Activated CD4-positive, alpha-beta T cell treated with anti-CD3 and anti-CD28 coated beads for 36 hours (primary cell): ENCODE measurements at regions of chr19 and their contacts with region 1.

Region 1: GRCh38 chr19:41263850-41264580 is at the start of gene HNRNPUL1:
- DNase-seq: peak; percentile 99
- ATAC-seq: peak; percentile 70
- H3K4me3 Mint-ChIP-seq: peak within 1 kb of the TSS; percentile 95
- H3K27ac Mint-ChIP-seq: peak within 1 kb of the TSS; percentile 100
- H3K4me1 Mint-ChIP-seq: peaks cover 34% of the 10 kb centered on the region
- H3K27me3 Mint-ChIP-seq: no peaks in the 10 kb centered on the region
- total RNA-seq, gene HNRNPUL1: 263 to 312 TPM

Region 2: DNA sequence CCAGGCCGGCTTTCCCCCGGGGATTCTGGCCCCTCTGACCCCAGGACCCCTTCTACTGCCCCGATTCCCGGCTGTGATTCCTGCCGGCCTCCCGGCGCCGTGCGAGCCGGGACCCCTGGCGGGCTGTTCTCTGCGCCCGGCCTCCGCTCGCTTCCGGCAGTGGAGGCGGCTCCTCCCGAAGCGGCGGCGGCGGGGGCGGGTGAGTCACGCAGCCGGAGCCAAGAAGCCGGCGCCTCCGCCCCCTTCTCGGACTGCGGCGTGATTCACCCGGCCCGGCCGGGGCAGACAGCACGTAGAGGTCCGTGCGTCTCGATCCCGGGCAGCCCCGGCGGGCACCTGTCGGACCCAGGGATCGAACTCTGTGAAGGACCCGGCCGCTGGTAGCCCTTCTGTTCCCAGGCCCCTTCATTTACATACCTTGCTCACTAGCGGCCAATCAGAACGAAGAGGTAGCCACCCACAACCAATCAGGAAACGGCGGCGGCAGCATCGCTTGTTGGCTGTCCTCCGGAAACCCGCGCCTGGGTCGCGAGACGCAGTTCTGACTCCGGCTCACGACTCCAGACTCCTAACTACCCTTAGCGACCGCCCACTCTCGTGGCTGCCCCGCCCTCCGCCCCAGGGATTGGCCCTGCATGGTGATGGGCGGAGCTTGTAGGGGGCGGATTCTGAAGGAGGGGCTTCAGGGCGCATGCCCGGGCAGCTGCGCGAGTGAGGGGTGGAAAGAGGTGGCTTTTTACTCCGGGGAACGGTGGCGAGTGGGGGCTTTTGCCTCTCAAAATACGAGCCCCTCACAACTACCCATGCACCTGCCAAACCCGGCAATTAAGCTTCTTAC is 838.3 kb before region 1 on chr19 and contains the start of gene SERTAD1:
- CTCF ChIA-PET with region 1: no interaction called
- POLR2A ChIA-PET with region 1: interaction called, 3 read pairs
- intact Hi-C with region 1: loop called in 1 of 2 experiments (anchors 5 kb)
- DNase-seq: peak; percentile 100
- ATAC-seq: peak; percentile 91
- H3K4me3 Mint-ChIP-seq: peak within 1 kb of the TSS; percentile 89
- H3K27ac Mint-ChIP-seq: peak within 1 kb of the TSS; percentile 96
- H3K4me1 Mint-ChIP-seq: peaks cover 20% of the 10 kb centered on the region
- H3K27me3 Mint-ChIP-seq: no peaks in the 10 kb centered on the region
- total RNA-seq, gene SERTAD1: 10.0 to 14.7 TPM

Region 3: GRCh38 chr19:40750059-40750873 is 513.7 kb before region 1 on chr19 and contains the start of gene ACTMAP:
- CTCF ChIA-PET with region 1: no interaction called
- POLR2A ChIA-PET with region 1: no interaction called
- intact Hi-C with region 1: loop called in 1 of 2 experiments (anchors 1 kb)
- DNase-seq: peak; percentile 100
- ATAC-seq: peak; percentile 90
- H3K4me3 Mint-ChIP-seq: peak within 1 kb of the TSS; percentile 81
- H3K27ac Mint-ChIP-seq: peak within 1 kb of the TSS; percentile 99
- H3K4me1 Mint-ChIP-seq: peaks cover 34% of the 10 kb centered on the region
- H3K27me3 Mint-ChIP-seq: no peaks in the 10 kb centered on the region
- total RNA-seq, gene ACTMAP: 15.0 to 18.0 TPM

Region 4: GRCh38 chr19:41206926-41207750 is 56.9 kb before region 1 on chr19:
- CTCF ChIA-PET with region 1: interaction called, 73 read pairs
- POLR2A ChIA-PET with region 1: interaction called, 12 read pairs
- intact Hi-C with region 1: loop called (anchors 1 kb)
- DNase-seq: no peak
- ATAC-seq: no peak
- H3K4me3 Mint-ChIP-seq: no peak overlapping the region
- H3K27ac Mint-ChIP-seq: no peak overlapping the region
- H3K4me1 Mint-ChIP-seq: peaks cover 2% of the 10 kb centered on the region
- H3K27me3 Mint-ChIP-seq: no peaks in the 10 kb centered on the region

Region 5: GRCh38 chr19:41353466-41354342 is 89.7 kb after region 1 on chr19 and contains the start of gene TGFB1:
- CTCF ChIA-PET with region 1: interaction called, 7 read pairs
- POLR2A ChIA-PET with region 1: interaction called, 20 read pairs
- intact Hi-C with region 1: loop called (anchors 1 kb)
- DNase-seq: peak; percentile 96
- ATAC-seq: peak; percentile 45
- H3K4me3 Mint-ChIP-seq: peak within 1 kb of the TSS; percentile 96
- H3K27ac Mint-ChIP-seq: peak within 1 kb of the TSS; percentile 97
- H3K4me1 Mint-ChIP-seq: peaks cover 58% of the 10 kb centered on the region
- H3K27me3 Mint-ChIP-seq: no peaks in the 10 kb centered on the region
- total RNA-seq, gene TGFB1: 86.2 to 99.0 TPM

Region 6: GRCh38 chr19:41548954-41549688 is 285.1 kb after region 1 on chr19:
- CTCF ChIA-PET with region 1: interaction called, 3 read pairs
- POLR2A ChIA-PET with region 1: interaction called, 3 read pairs
- intact Hi-C with region 1: loop called (anchors 5 kb)
- DNase-seq: peak; percentile 89
- ATAC-seq: peak; percentile 76
- H3K4me3 Mint-ChIP-seq: peak overlapping the region; percentile 90
- H3K27ac Mint-ChIP-seq: peak overlapping the region; percentile 99
- H3K4me1 Mint-ChIP-seq: peaks cover 69% of the 10 kb centered on the region
- H3K27me3 Mint-ChIP-seq: no peaks in the 10 kb centered on the region

Region 7: DNA sequence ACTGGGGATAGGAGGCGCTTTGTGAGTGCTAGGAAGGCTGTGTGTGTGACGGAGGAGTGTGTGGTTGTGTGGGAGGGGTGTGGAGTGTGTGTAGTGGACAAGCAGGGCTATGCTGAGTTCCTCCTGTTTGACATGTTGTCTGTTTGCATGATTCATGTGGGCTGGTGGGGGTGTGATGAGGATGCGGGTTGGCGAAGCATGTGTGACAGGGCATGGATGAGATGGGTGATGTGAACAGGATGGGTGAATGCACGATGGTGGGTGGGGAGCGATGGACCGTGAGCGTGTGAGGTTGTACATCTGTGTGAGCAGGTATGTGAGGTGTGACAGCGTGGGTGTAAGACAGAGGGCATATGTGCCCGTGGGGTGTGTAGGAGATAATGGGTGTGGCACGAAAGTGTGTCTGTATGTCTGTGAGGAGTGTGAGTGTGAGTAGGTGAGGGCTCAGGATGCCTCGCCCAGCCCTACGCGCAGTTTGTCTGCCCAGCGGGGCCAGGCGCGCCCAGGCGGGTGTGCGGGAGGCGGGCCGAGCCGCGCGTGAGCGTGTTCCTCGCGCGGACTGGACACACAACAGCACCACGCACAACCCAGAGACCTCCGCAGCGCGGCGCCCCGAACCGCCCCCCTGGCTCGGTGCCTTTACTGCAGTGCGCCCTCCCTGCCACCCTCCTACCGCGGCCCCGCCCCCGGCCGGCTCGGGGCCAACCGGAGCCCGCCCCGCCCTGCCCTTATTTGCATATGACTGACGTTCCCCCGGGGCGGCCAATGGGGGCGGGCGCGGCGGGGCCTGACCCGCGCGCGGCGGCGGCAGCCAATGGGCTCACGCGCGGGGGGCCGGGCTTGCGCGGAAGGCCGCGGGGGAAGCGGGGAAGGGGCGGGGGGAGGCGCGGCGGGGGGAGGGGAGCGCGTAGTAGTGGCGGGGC is 1019.4 kb after region 1 on chr19:
- CTCF ChIA-PET with region 1: no interaction called
- POLR2A ChIA-PET with region 1: no interaction called
- intact Hi-C with region 1: loop called in 1 of 2 experiments (anchors 5 kb)
- DNase-seq: peak; percentile 98
- ATAC-seq: peak; percentile 62
- H3K4me3 Mint-ChIP-seq: no peak overlapping the region
- H3K27ac Mint-ChIP-seq: no peak overlapping the region
- H3K4me1 Mint-ChIP-seq: peaks cover 41% of the 10 kb centered on the region
- H3K27me3 Mint-ChIP-seq: no peaks in the 10 kb centered on the region